Gastrocnemius medialis (tissue), 4 donors: ENCODE measurements at regions of chr2 and their contacts with region 1.

Region 1: DNA sequence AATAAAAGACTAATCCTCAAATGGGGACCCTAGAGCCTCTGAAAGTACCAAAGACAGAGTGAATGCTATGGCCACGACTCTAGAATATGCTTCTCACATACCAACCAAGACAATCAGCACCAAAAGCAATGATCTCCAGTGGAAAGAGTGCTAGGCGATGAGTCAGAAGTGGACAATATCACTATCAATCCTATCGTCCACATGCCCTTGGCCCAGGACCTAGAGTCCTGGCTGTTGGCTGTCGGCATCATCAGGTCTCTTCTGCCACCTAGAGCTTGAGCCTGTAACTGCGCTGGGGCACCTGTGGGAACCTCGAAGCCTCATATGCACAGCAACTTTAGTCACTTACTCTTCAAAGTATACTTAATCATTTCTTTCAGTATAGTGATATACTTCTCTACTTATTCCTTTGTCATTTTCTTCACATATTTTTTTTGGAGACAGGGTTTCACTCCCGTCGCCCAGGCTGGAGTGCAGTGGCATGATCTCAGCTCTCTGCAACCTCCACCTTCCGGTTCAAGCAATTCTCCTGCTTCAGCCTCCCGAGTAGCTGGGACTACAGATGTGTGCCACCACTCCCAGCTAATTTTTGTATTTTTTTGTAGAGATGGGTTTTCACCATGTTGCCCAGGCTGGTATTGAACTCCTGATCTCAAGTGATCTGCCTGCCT is 29.7 kb downstream of the NOL10 start:
- DNase-seq: peak; percentile 14 to 38
- ATAC-seq: peak; percentile 81 to 90
- H3K4me3 ChIP-seq: no peak overlapping the region
- H3K27ac ChIP-seq: no peak overlapping the region
- H3K4me1 ChIP-seq: no peaks in the 10 kb centered on the region
- H3K27me3 ChIP-seq: no peaks in the 10 kb centered on the region
- CTCF ChIP-seq: peak; percentile 15 to 71 (median 64)
- POLR2A ChIP-seq: no peak

Region 2: DNA sequence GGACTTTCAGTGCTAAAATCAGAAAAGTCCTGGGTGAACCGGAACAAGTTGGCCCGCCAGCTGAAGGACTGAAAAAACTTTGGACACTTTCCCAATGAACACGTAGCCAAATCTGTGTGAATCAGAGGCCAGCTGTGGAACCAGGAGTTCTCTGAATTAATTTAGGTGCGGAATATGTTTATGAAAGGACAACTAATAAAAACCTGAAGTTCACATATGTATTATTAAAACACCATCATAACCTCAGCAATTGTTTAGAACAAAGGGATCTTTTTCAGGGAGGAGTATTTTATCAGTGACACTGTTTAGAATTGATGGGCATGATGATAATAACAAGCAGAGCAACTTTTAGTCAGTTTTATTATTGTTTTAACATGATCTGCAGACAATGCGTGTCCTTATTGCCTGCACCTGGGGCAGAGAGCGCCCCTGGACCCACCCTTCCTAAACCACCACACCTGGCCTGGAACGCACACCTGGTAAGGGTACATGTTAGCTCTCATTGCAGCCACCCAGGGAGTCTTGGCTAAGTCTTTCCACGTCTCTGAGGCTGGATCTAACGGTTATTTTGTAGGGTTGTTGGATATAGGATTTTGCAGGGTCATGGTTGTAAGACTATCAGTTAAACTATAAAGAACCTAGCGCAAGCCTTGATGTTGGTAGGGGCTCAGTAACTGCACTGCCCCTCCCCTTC is 202.0 kb before region 1 on chr2:
- in situ Hi-C with region 1: loop called in 1 of 4 experiments (anchors 25 kb)
- intact Hi-C with region 1: no loop called
- DNase-seq: no peak
- ATAC-seq: peak in 1 of 2 donors; percentile 61
- H3K4me3 ChIP-seq: no peak overlapping the region
- H3K27ac ChIP-seq: peak overlapping the region in 1 of 4 donors; percentile 66
- H3K4me1 ChIP-seq: peaks cover 16 to 33% of the 10 kb centered on the region in 2 donors
- H3K27me3 ChIP-seq: no peaks in the 10 kb centered on the region
- CTCF ChIP-seq: no peak
- POLR2A ChIP-seq: no peak

Region 3: GRCh38 chr2:12192762-12193161 is 1532.7 kb after region 1 on chr2:
- in situ Hi-C with region 1: no loop called
- intact Hi-C with region 1: no loop called
- DNase-seq: no peak
- ATAC-seq: no peak
- H3K4me3 ChIP-seq: no peak overlapping the region
- H3K27ac ChIP-seq: peak overlapping the region in 3 of 4 donors; percentile 29 to 53 (median 35)
- H3K4me1 ChIP-seq: no peaks in the 10 kb centered on the region
- H3K27me3 ChIP-seq: no peaks in the 10 kb centered on the region
- CTCF ChIP-seq: no peak
- POLR2A ChIP-seq: no peak